Activated naive CD4-positive, alpha-beta T cell treated with anti-CD3 and anti-CD28 coated beads for 36 hours (primary cell): ENCODE measurements at regions of chr6 and their contacts with region 1.

Region 1: GRCh38 chr6:155493694-155494143 is 38.1 kb upstream of the NOX3 start:
- DNase-seq: peak; percentile 53
- H3K4me3 Mint-ChIP-seq: no peak overlapping the region
- H3K27ac Mint-ChIP-seq: peak overlapping the region; percentile 50
- H3K4me1 Mint-ChIP-seq: peaks cover 41% of the 10 kb centered on the region
- H3K27me3 Mint-ChIP-seq: no peaks in the 10 kb centered on the region

Region 2: GRCh38 chr6:155327326-155328073 is 166.2 kb before region 1 on chr6:
- CTCF ChIA-PET with region 1: interaction called, 6 read pairs
- intact Hi-C with region 1: loop called (anchors 1 kb)
- DNase-seq: peak; percentile 81
- H3K4me3 Mint-ChIP-seq: no peak overlapping the region
- H3K27ac Mint-ChIP-seq: peak overlapping the region; percentile 57
- H3K4me1 Mint-ChIP-seq: peaks cover 28% of the 10 kb centered on the region
- H3K27me3 Mint-ChIP-seq: no peaks in the 10 kb centered on the region

Region 3: DNA sequence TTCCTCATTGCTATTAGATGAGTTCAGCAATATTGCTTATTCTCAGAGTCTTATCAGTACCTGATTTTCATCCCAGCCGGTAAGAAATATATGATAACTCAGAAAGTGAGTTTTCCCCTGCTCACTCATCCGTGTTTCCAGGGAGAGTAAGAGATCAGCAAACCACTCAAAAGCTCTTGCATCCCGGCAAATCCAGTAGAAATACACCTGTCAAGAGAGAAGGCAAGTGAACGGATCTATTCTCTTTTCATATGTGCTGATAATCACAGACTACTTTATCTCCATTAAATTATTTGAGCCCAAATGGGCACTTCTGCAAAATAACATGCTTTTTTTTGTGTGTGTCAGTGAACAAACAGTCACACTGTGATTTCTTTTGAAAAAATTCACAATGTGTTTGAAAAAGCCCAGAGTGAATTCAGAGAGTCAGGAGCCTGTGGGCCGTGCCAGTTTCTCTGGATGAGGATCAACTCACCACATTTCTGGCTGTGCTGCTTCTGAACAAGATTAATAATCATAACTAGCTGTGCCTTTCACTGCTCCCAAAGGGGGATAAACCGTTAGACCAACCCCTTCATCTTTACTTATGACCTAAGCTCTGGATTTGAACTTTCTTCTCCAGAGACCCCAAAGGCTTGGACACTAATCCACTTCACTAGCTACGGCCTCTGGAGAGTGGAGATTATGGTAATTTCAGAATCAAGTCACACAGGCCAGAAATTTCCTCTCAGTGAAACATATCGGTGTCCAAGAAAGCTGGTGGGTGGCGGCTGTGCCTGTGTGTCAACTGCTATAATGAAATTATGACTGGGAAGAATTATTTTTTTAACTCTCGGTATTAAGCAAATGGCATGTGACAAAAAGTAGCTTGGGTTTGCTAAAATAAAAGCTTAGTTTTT is 82.3 kb before region 1 on chr6:
- CTCF ChIA-PET with region 1: no interaction called
- intact Hi-C with region 1: no loop called
- DNase-seq: no peak
- H3K4me3 Mint-ChIP-seq: no peak overlapping the region
- H3K27ac Mint-ChIP-seq: no peak overlapping the region
- H3K4me1 Mint-ChIP-seq: peaks cover 5% of the 10 kb centered on the region
- H3K27me3 Mint-ChIP-seq: no peaks in the 10 kb centered on the region

Region 4: DNA sequence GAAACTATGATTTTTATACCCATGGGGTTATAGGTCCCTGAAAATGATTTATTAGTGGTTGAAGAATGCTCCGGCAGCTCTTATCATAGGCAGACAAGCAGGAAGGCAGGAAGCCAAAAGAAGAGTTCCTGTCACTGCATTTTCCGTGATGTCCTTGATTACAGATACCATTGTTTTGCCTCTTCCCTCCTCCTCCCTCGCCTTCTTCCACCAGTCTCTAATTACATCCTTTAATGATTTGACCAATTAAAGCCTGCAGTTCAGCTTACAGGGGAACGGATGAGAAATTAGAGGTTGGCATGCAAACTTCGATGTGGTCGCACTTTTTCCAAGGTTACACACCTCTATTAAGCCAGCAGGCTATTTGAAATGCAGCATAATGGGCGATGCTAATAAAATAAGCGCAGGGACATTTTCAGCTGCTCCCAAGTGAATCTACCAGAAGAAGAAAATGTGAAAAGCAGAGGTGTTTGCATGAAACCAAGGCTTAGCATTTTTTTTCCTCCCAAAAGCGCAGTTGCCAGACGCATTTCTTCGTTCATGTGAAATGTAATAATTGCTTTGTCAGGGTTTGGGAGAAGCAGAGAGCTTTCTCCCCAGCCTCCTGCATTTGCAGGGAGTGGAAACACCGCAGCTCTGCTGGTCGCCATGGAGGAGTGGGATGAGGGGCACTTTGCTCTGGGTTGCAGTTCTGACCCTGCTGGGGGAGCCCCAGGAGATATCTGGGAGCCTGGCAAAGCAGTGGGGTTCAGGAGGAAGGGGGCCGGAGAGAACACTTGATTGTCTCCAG is 44.1 kb before region 1 on chr6:
- CTCF ChIA-PET with region 1: no interaction called
- intact Hi-C with region 1: no loop called
- DNase-seq: no peak
- H3K4me3 Mint-ChIP-seq: no peak overlapping the region
- H3K27ac Mint-ChIP-seq: no peak overlapping the region
- H3K4me1 Mint-ChIP-seq: peaks cover 21% of the 10 kb centered on the region
- H3K27me3 Mint-ChIP-seq: no peaks in the 10 kb centered on the region

Region 5: DNA sequence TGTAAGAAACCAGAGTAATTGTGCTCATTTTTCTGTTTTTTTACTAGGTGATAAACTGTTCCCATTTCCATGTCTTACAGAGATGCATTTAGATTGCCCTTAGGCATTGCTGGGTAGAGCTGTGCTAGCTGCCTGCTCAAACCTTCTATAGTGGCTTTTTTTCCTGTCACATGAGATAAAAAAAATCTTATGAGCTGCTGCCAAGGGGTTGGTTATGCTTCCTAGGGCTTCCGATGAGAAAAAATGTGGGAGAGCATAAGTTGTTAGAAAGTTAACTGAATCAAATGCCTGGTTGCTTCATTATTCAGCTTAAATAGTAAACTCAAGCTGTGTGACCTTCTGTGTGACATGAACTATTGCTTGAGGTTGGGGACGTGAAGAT is 11.9 kb after region 1 on chr6:
- CTCF ChIA-PET with region 1: interaction called, 12 read pairs
- intact Hi-C with region 1: no loop called
- DNase-seq: no peak
- H3K4me3 Mint-ChIP-seq: peak overlapping the region; percentile 3
- H3K27ac Mint-ChIP-seq: no peak overlapping the region
- H3K4me1 Mint-ChIP-seq: peaks cover 22% of the 10 kb centered on the region
- H3K27me3 Mint-ChIP-seq: no peaks in the 10 kb centered on the region

Region 6: DNA sequence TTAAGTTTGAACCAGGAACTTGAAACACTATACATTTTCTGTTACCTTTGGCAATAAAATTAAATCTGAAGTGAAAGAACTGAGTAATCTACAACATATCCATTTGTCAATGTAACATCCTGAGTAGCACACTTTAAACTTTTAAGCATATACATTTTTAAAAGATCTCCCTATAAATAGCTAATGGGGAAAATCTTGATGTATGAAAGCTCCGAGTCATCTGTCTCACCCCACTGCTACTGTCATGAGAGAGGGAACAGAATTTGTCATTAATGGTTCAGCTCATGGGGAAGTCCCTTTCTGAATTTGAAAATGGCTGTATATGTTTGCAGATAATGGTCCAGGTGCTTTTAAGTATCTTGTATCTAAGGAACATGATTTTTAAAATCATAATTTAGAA is 17.2 kb after region 1 on chr6:
- CTCF ChIA-PET with region 1: interaction called, 12 read pairs
- intact Hi-C with region 1: loop called (anchors 1 kb)
- DNase-seq: peak; percentile 40
- H3K4me3 Mint-ChIP-seq: no peak overlapping the region
- H3K27ac Mint-ChIP-seq: peak overlapping the region; percentile 73
- H3K4me1 Mint-ChIP-seq: peaks cover 23% of the 10 kb centered on the region
- H3K27me3 Mint-ChIP-seq: no peaks in the 10 kb centered on the region

Region 7: GRCh38 chr6:155523821-155524651 is 30.3 kb after region 1 on chr6:
- CTCF ChIA-PET with region 1: interaction called, 4 read pairs
- intact Hi-C with region 1: loop called (anchors 1 kb)
- DNase-seq: peak; percentile 43
- H3K4me3 Mint-ChIP-seq: no peak overlapping the region
- H3K27ac Mint-ChIP-seq: peak overlapping the region; percentile 84
- H3K4me1 Mint-ChIP-seq: peaks cover 47% of the 10 kb centered on the region
- H3K27me3 Mint-ChIP-seq: no peaks in the 10 kb centered on the region

Region 8: DNA sequence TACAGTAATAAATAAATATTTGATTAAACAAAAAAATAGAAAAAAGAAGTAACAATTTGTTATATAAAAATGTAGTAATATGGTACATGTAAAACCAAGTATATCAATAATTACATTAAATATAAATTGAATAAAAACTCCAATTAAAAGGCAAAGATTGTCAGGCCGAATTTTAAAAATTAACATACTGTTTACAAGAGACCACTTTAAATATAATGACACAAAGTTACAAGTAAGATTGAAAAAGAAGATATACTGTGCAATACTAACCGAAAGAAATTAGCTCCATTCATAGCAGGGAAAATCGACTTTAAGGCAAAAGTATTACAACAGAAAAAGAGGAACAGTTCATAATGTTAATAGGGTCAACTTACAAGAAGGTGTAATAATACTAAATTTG is 712.0 kb after region 1 on chr6:
- CTCF ChIA-PET with region 1: no interaction called
- intact Hi-C with region 1: no loop called
- DNase-seq: no peak
- H3K4me3 Mint-ChIP-seq: no peak overlapping the region
- H3K27ac Mint-ChIP-seq: no peak overlapping the region
- H3K4me1 Mint-ChIP-seq: peaks cover 6% of the 10 kb centered on the region
- H3K27me3 Mint-ChIP-seq: no peaks in the 10 kb centered on the region